ENCODE measurements at regions of chr9 and their contacts with region 1.

Region 1: DNA sequence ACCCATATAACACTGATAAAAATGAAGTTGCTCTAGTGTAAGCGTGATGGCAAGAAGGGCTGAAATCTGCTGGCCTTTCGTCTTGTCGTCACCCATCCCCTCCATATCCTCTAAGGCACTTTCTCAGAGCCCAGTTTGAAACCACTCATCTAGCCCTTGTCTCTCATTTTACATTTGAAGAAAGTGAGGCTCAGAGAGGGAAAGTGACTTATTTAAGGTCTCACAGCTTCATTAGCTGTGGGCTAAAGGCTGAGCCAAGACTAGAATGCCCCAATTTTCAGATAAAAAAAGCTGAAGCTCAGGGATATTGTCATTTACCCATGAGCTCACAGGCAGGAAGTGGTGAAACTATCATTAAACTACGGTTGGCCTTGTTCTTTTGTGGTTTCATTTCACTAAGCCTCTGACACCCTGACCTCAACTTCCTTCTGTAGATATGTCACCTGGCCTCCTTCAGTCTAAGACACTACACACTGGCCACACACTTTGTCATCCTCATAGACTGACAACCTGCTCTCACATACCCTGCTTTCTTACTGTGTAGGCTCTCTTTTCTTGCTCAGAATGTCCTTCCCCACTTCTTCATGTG is 176.7 kb upstream of the DMAC1 start:
- DNase-seq: no peak

Region 2: GRCh38 chr9:6639622-6640021 is 1336.6 kb before region 1 on chr9:
- intact Hi-C with region 1: loop called in 1 of 2 experiments (anchors 5 kb)
- DNase-seq: no peak

Region 3: GRCh38 chr9:7656636-7657035 is 319.6 kb before region 1 on chr9:
- intact Hi-C with region 1: no loop called
- DNase-seq: no peak

Region 4: GRCh38 chr9:7901621-7902020 is 74.6 kb before region 1 on chr9:
- intact Hi-C with region 1: no loop called
- DNase-seq: no peak

Region 5: DNA sequence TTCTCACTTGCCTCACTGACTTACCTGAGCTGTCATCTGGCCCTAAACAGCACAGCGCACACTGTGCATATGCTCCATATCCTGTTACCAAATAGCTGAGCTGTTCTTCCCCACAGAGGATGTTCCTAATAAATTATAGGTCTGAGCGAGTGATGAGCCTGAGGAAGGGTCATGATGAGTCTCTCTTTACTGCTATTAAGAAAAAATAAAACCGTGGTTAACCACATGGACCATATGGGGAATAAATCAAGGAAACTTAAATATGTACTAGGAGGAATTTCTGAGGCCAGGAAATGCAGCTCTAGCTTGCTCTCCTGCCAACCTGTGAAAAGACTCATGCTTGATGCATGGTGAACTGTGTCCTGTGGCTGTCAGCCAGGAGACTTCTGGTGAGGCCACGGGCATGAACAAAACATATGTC is 248.1 kb after region 1 on chr9:
- intact Hi-C with region 1: no loop called
- DNase-seq: no peak